ENCODE measurements at regions of chr11 and their contacts with region 1.

Region 1: DNA sequence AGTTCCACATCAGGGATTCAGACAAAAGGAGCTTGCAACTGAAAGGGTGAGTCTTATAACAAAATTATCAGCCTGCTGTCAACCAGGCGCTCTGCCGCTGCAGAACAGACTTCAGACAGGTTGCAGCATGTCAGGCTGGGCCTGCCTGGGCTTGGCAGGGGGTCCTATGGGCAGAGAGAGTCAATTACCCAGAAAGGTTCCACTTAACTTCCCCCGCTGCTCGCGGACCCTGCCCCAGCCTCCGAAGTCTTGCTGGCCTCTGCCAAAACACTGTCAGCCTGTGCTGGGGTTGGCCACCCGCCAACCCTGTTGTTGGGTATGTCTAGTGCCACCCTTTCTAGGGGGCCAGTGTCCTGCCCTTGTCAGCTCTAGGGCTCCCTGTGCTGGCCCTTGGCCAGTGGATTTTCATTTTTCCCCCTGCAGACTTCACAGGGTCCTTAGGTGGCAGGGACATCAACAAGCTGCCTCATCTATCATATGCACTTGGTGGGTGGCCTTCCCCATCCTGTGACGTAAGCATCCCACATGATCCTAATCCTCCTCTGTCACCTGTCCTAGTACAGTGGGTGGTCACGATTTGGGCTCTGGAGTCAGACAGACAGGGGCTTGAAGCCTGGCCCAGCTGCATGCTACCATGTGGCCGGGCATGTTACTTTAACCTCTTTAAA is 166.5 kb upstream of the CADM1 start:
- DNase-seq: peak; percentile 59
- H3K4me3 ChIP-seq: no peak overlapping the region
- H3K27ac ChIP-seq: peak overlapping the region in 1 of 2 experiments; percentile 81; a peak in 2 of 4 replicates
- H3K4me1 ChIP-seq: peaks cover 0 to 27% of the 10 kb centered on the region in 2 experiments; a peak in 1 of 4 replicates
- H3K27me3 ChIP-seq: no peaks in the 10 kb centered on the region
- CTCF ChIP-seq: no peak
- EP300 ChIP-seq: peak in 1 of 2 experiments; percentile 58; a peak in 1 of 4 replicates
- RAD21 ChIP-seq: no peak; the same call in 1 of the 2 replicates

Region 2: GRCh38 chr11:115637599-115638241 is 33.0 kb before region 1 on chr11:
- CTCF ChIA-PET with region 1: no interaction called
- POLR2A ChIA-PET with region 1: no interaction called
- DNase-seq: peak; percentile 45
- H3K4me3 ChIP-seq: no peak overlapping the region
- H3K27ac ChIP-seq: peak overlapping the region in 1 of 2 experiments; percentile 72; a peak in 2 of 4 replicates
- H3K4me1 ChIP-seq: peaks cover 0 to 16% of the 10 kb centered on the region in 2 experiments; a peak in 1 of 4 replicates
- H3K27me3 ChIP-seq: peaks cover 21% of the 10 kb centered on the region; the same call in 1 of the 2 replicates
- CTCF ChIP-seq: no peak
- EP300 ChIP-seq: no peak
- RAD21 ChIP-seq: no peak

Region 3: DNA sequence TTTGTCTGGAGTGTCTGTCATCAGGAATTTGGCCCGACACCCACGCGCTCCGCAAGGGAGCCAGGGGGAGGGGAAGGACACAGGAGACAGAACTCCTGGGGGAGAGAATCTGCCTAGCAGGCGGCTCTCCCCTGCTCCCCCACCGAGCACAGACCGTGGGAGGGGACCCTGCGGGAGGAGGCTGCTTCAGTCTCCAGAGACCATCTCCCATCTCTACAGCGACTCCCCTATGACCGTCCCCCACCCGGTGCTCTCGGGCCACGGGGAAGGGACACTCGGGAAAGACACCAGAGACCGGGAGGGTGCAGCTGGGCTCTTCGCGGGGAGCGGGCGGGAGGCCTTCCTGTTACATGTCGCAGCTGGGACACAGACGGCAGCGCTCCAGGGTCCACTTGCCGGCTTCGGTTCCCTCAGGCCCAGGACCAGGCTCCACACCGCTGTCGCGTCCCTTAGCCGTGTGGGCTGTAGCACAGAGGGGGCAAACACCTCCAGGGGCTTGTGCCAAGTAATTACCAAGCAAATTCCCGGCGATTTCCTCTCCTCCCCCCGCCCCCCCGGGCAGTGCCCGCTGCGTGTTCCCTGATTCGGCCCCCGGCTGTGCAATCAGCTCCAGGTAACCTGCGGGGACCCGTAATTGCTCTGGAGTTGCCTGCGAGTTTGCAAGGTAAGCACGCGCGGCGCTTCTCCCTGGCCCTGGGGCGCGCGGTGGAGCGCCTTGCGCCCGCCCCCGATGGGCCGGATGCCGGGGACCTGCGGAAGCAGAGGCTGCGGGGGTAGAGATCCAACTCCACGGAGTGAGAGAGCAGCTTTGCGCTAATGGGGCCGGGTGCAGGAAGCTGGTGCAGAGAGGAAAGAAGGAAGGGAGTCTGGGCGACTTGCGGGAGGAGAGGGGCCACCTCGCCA is 11.4 kb before region 1 on chr11:
- CTCF ChIA-PET with region 1: interaction called, 12 read pairs
- POLR2A ChIA-PET with region 1: no interaction called
- DNase-seq: peak; percentile 83
- H3K4me3 ChIP-seq: peak overlapping the region in 1 of 2 experiments; percentile 31; a peak in 1 of 4 replicates
- H3K27ac ChIP-seq: no peak overlapping the region; a peak in 1 of 4 replicates
- H3K4me1 ChIP-seq: peaks cover 0 to 10% of the 10 kb centered on the region in 2 experiments; a peak in 2 of 4 replicates
- H3K27me3 ChIP-seq: no peaks in the 10 kb centered on the region
- CTCF ChIP-seq: no peak
- EP300 ChIP-seq: no peak
- RAD21 ChIP-seq: no peak

Region 4: DNA sequence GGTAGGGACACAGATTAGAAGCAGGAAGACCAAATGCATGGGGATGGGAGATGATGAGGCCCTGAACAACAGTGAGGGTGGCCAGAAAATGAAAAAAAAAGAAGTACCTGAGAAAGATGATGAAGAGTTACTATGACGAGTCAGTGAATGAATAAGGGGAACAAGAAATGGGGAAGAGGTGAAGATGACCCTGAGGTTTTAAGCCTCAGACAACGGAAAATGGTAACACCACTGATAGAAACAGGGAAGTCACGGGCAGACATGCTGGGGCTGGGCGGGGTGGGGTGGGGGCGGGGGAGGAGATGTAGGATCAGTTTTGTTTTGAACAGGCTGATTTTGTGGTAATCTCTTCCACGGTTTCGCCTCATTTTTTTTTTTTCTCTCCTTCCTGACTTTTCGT is 38.6 kb after region 1 on chr11:
- CTCF ChIA-PET with region 1: no interaction called
- POLR2A ChIA-PET with region 1: no interaction called
- DNase-seq: no peak
- H3K4me3 ChIP-seq: no peak overlapping the region
- H3K27ac ChIP-seq: no peak overlapping the region
- H3K4me1 ChIP-seq: no peaks in the 10 kb centered on the region; a peak in 1 of 4 replicates
- H3K27me3 ChIP-seq: no peaks in the 10 kb centered on the region; the same call in 1 of the 2 replicates
- CTCF ChIP-seq: no peak
- EP300 ChIP-seq: no peak
- RAD21 ChIP-seq: no peak

Measured in SK-N-SH (cell line).